Calu3 (cell line): ENCODE measurements at regions of chr4 and their contacts with region 1.

Region 1: GRCh38 chr4:113394730-113395530 is 345.5 kb downstream of the ANK2 start:
- DNase-seq: peak; percentile 53
- H3K4me3 Mint-ChIP-seq: no peak overlapping the region
- H3K27ac Mint-ChIP-seq: no peak overlapping the region
- H3K4me1 Mint-ChIP-seq: no peaks in the 10 kb centered on the region
- H3K27me3 Mint-ChIP-seq: no peaks in the 10 kb centered on the region
- CTCF ChIP-seq: peak; percentile 55

Region 2: DNA sequence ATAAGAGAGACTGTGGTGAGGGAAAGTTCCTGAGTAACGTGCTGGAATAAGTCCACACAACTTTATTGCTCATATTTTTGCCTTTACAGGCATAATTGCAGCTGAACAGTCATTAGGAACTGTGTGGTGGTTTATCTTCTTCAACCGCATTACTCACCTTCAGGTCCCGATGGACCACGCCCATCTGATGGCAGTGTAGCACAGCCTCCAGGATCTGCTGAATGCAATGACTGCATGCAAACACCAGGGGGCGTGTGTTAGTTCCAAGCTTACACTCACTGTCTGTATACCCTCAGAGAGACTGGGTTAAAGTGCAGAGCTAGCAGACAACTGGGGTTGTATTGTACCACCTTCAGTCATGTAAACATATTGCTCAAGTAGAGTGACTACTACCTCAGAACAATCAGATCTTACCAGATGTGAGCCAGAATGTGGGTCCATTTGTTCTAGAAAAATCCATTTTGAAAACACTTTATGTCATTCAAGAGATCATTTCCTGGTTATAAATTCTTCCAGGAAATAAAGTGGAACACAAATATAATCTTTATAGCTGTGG is 152.6 kb after region 1 on chr4:
- CTCF ChIA-PET with region 1: interaction called, 5 read pairs
- intact Hi-C with region 1: loop called (anchors 5 kb)
- DNase-seq: peak; percentile 87
- H3K4me3 Mint-ChIP-seq: no peak overlapping the region
- H3K27ac Mint-ChIP-seq: peak overlapping the region; percentile 56
- H3K4me1 Mint-ChIP-seq: peaks cover 9% of the 10 kb centered on the region
- H3K27me3 Mint-ChIP-seq: no peaks in the 10 kb centered on the region
- CTCF ChIP-seq: peak; percentile 82

Region 3: GRCh38 chr4:113893546-113893945 is 498.6 kb after region 1 on chr4:
- CTCF ChIA-PET with region 1: interaction called, 7 read pairs
- intact Hi-C with region 1: loop called (anchors 5 kb)
- DNase-seq: no peak
- H3K4me3 Mint-ChIP-seq: no peak overlapping the region
- H3K27ac Mint-ChIP-seq: no peak overlapping the region
- H3K4me1 Mint-ChIP-seq: no peaks in the 10 kb centered on the region
- H3K27me3 Mint-ChIP-seq: no peaks in the 10 kb centered on the region
- CTCF ChIP-seq: no peak

Region 4: GRCh38 chr4:114072781-114073180 is 677.9 kb after region 1 on chr4:
- CTCF ChIA-PET with region 1: no interaction called
- intact Hi-C with region 1: loop called (anchors 5 kb)
- DNase-seq: no peak
- H3K4me3 Mint-ChIP-seq: no peak overlapping the region
- H3K27ac Mint-ChIP-seq: no peak overlapping the region
- H3K4me1 Mint-ChIP-seq: peaks cover 12% of the 10 kb centered on the region
- H3K27me3 Mint-ChIP-seq: no peaks in the 10 kb centered on the region
- CTCF ChIP-seq: no peak